AG04449 (cell line): ENCODE measurements at regions of chr5 and their contacts with region 1.

Region 1: GRCh38 chr5:118987988-118988865 is at the start of gene DTWD2:
- DNase-seq: peak; percentile 24
- H3K4me3 ChIP-seq: peak within 1 kb of the TSS; percentile 74
- CTCF ChIP-seq: peak; percentile 95

Region 2: DNA sequence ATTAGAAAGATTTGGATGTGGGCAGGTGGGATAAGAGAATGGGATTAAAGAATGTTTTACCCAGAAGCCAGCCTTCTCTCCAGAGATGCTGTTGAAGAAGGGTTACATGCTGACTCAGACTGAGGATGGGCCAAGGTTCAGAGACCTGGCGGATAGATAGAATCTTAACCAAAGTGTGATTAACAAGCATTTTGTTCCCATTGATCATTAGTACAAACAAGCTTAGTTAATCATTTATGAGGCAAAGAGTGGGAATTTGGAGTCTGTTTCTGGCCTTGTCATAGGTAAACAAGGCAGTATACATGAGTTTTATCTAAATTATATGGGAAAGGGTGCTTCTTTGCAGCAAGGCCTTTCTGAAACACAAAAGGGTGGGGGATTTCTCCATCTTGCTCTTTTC is 20.9 kb after region 1 on chr5:
- CTCF ChIA-PET with region 1: interaction called, 17 read pairs
- POLR2A ChIA-PET with region 1: no interaction called
- DNase-seq: no peak
- H3K4me3 ChIP-seq: no peak overlapping the region
- CTCF ChIP-seq: no peak

Region 3: DNA sequence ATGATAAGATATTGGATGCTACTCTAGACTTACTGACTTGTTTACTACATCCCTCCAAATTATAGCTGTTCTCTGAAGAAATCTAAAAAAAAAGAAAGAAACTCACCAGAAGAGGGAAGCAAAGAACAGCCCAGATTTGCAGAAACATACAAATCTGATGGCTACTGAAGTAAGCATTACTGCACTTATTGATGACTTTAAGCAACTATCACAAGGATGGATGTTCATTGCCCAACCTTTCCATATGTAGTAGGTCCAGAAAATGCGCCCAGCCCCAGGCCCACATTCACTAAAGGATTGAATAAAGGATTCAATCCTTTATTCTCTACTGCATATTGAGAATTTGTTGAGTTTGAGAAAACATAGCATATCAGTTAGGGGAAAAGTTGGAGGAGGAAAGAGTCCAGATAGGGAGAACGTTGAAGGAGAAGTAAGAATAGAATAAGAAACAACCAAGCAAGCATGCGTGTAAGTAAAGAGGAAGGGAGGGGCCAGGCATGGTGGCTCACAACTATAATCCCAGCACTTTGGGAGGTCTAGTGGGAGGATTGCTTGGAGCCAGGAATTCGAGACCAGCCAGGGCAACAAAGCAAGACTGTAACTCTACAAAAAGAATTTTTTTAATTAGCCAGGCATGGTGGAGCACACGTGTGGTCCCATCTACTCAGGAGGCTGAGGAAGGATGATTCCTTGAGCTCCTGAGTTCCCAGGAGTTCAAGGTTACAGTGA is 34.0 kb after region 1 on chr5:
- CTCF ChIA-PET with region 1: interaction called, 34 read pairs
- POLR2A ChIA-PET with region 1: no interaction called
- DNase-seq: peak; percentile 3
- H3K4me3 ChIP-seq: no peak overlapping the region
- CTCF ChIP-seq: peak; percentile 37

Region 4: GRCh38 chr5:119332978-119333401 is 344.8 kb after region 1 on chr5:
- CTCF ChIA-PET with region 1: interaction called, 29 read pairs
- POLR2A ChIA-PET with region 1: no interaction called
- DNase-seq: no peak
- H3K4me3 ChIP-seq: no peak overlapping the region
- CTCF ChIP-seq: no peak

Region 5: GRCh38 chr5:119435436-119436132 is 447.4 kb after region 1 on chr5:
- CTCF ChIA-PET with region 1: interaction called, 64 read pairs
- POLR2A ChIA-PET with region 1: no interaction called
- DNase-seq: no peak
- H3K4me3 ChIP-seq: no peak overlapping the region
- CTCF ChIP-seq: peak; percentile 73